ENCODE measurements at regions of chr3 and their contacts with region 1.

Region 1: DNA sequence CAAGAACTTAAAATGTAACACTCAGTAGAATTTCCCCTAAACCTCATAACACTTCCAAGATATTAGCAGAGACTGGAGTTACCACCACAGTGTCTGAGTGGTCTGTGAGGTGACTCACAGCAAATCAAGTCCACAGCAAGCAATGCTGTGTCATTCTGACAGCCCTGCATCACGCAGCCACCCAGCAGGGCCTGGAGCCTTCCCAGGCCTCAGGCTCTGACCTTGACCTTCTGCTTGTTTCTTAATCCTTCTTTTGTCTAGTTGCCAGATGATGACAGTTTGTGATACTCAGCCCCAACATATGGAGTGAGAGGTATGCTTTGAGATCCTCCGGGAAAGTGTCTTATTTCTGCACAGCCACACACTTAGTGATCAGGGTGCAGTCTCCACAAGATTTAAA is 82.5 kb downstream of the TOP2B start:
- DNase-seq: no peak
- H3K4me3 ChIP-seq: no peak overlapping the region
- H3K27ac ChIP-seq: no peak overlapping the region
- H3K4me1 ChIP-seq: no peaks in the 10 kb centered on the region
- H3K27me3 ChIP-seq: no peaks in the 10 kb centered on the region
- CTCF ChIP-seq: no peak
- POLR2A ChIP-seq: no peak

Region 2: DNA sequence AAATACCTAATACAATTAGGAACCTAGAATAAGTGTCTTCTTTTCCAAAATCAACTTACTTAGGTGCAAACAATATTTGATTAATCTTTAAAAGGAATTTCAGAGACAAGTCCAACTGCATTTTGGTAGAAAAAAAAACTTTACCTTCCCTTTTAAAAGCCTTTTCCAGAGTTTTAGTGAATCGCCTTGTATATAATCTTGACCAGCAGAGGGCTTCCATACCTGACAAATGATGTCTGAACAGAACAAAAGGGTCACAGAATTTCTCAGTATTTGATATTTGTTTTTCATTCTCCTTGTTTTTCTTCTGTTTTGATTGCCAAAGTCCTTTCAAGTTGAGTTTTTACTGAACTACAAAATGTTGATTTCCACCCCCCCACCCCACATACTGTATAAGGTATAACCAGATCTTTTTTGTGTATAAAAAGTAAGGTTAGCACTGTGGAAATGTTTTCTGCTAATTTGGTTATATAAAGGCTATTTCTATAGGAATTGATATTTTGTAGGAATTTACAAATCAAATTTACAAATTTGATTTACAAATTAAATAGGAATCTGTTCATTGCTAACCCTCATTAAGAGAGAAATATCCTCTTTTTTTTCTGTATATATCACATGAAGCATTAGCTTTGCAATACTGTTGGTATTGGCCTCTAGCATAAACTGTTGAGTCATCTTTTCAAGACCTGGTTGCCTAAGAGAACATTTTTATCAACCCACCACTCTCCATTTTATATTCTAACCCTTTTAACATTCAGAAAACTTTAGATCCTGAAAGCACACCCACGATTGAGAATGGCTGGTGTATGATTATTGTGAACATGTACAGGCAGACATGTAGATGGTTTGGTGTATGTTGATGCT is 618.2 kb before region 1 on chr3:
- intact Hi-C with region 1: no loop called
- DNase-seq: no peak
- H3K4me3 ChIP-seq: no peak overlapping the region
- H3K27ac ChIP-seq: no peak overlapping the region
- H3K4me1 ChIP-seq: peaks cover 0 to 3% of the 10 kb centered on the region in 2 donors
- H3K27me3 ChIP-seq: no peaks in the 10 kb centered on the region
- CTCF ChIP-seq: peak; percentile 18 to 79 (median 59)
- POLR2A ChIP-seq: no peak

Region 3: DNA sequence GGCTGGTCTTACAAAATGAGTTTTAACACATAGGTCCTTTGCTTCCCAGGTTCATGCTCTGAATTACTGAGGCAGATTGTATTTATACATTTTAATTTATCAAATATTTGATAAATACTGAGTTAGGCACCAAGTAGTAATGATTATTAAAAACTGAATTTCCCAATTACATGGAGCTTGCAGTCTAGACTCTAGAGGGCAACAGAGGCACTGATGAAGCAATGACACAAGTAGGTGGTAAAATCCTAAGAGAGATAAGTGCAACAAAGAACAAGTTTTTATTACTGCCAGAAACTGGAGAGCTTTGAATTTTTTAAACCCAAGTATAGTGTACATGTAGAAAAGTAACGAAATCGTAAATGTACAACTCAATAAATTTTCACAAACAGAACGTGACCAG is 560.4 kb before region 1 on chr3:
- intact Hi-C with region 1: loop called (anchors 10 kb)
- DNase-seq: no peak
- H3K4me3 ChIP-seq: no peak overlapping the region
- H3K27ac ChIP-seq: no peak overlapping the region
- H3K4me1 ChIP-seq: no peaks in the 10 kb centered on the region
- H3K27me3 ChIP-seq: no peaks in the 10 kb centered on the region
- CTCF ChIP-seq: peak; percentile 28 to 77 (median 64)
- POLR2A ChIP-seq: no peak

Region 4: DNA sequence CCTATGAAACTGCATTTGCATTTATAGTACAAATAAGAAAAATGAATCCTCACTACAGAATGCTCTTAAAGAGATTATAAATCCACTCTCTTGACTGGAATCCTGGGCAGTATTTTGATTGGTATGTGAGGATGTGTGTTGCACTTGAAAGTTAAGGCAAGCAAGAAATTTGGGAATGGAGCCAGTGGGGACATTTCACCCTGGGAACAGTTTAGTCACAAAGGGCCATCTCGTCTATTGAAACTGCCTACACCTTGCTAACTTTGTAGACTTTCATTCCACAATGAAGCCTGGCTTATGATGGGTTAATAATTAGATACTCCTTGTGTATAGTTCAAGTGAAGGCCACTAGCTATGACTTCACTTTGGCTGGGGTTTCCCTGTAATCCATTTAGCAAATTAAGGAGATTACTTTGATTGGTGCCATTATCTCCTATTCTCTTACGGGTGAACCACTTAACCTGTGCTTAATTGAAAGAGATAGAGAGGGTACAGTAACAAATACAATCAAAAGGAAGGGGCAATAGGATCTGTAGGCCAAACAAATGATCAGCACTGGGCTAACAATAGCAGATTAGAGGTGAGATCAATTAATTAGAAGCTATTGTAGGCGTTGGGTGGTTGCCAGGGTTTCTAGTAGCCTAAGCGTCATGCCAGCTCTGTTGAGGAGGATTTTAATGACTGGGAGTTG is 301.1 kb before region 1 on chr3:
- intact Hi-C with region 1: no loop called
- DNase-seq: peak; percentile 76 to 78
- H3K4me3 ChIP-seq: no peak overlapping the region
- H3K27ac ChIP-seq: peak overlapping the region in 2 of 3 donors; percentile 17 to 21
- H3K4me1 ChIP-seq: peaks cover 4 to 11% of the 10 kb centered on the region in 2 donors
- H3K27me3 ChIP-seq: no peaks in the 10 kb centered on the region
- CTCF ChIP-seq: no peak
- POLR2A ChIP-seq: no peak